Spleen (tissue), 13 donors: ENCODE measurements at regions of chr19 and their contacts with region 1.

Region 1: DNA sequence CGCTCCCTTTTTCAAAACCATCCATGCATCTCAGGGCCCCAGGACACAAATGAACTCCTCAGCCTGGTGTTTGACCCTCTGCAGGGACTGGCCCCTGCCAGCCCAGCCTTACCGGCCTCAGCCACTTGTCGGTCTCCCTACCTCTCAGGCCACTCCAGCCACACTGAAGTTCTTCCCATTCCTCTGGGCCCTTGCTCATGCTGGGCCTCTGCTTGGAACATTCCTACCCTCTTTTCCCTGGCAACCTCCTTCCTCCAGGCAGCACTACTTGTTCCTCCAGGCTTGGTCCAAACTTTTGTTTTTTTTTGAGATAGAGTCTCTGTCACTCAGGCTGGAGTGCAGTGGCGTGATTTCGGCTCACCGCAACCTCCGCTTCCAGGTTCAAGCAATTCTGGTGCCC is 7.6 kb upstream of the EGLN2 start:
- DNase-seq: no peak
- H3K4me3 ChIP-seq: no peak overlapping the region
- H3K27ac ChIP-seq: peak overlapping the region in 1 of 8 donors; percentile 5
- H3K4me1 ChIP-seq: peaks cover 0 to 24% (median 10%) of the 10 kb centered on the region in 6 donors
- H3K27me3 ChIP-seq: no peaks in the 10 kb centered on the region
- CTCF ChIP-seq: no peak
- POLR2A ChIP-seq: no peak

Region 2: GRCh38 chr19:40714441-40715299 is 76.7 kb before region 1 on chr19:
- intact Hi-C with region 1: loop called (anchors 5 kb)
- DNase-seq: peak; percentile 98
- H3K4me3 ChIP-seq: peak overlapping the region; percentile 33 to 84 (median 70)
- H3K27ac ChIP-seq: peak overlapping the region; percentile 78 to 96 (median 92)
- H3K4me1 ChIP-seq: peaks cover 32 to 76% (median 50%) of the 10 kb centered on the region in 6 donors
- H3K27me3 ChIP-seq: no peaks in the 10 kb centered on the region
- CTCF ChIP-seq: peak in 2 of 11 experiments; percentile 17 to 20
- POLR2A ChIP-seq: no peak